ENCODE measurements at regions of chr19 and their contacts with region 1.

Region 1: GRCh38 chr19:57389730-57390598 is at the start of gene ZNF548:
- DNase-seq: peak; percentile 93 to 100 (median 98)
- ATAC-seq: peak; percentile 95
- H3K4me3 ChIP-seq: peak within 1 kb of the TSS; percentile 79 to 93
- H3K4me3 Mint-ChIP-seq: peak within 1 kb of the TSS; percentile 95
- H3K27ac ChIP-seq: peak within 1 kb of the TSS; percentile 92 to 98
- H3K27ac Mint-ChIP-seq: peak within 1 kb of the TSS; percentile 97
- H3K4me1 ChIP-seq: peaks cover 19% of the 10 kb centered on the region
- H3K4me1 Mint-ChIP-seq: peaks cover 43% of the 10 kb centered on the region
- H3K27me3 ChIP-seq: no peaks in the 10 kb centered on the region
- H3K27me3 Mint-ChIP-seq: no peaks in the 10 kb centered on the region
- CTCF ChIP-seq: no peak
- total RNA-seq, gene ZNF548: 75.4 to 79.1 TPM

Region 2: DNA sequence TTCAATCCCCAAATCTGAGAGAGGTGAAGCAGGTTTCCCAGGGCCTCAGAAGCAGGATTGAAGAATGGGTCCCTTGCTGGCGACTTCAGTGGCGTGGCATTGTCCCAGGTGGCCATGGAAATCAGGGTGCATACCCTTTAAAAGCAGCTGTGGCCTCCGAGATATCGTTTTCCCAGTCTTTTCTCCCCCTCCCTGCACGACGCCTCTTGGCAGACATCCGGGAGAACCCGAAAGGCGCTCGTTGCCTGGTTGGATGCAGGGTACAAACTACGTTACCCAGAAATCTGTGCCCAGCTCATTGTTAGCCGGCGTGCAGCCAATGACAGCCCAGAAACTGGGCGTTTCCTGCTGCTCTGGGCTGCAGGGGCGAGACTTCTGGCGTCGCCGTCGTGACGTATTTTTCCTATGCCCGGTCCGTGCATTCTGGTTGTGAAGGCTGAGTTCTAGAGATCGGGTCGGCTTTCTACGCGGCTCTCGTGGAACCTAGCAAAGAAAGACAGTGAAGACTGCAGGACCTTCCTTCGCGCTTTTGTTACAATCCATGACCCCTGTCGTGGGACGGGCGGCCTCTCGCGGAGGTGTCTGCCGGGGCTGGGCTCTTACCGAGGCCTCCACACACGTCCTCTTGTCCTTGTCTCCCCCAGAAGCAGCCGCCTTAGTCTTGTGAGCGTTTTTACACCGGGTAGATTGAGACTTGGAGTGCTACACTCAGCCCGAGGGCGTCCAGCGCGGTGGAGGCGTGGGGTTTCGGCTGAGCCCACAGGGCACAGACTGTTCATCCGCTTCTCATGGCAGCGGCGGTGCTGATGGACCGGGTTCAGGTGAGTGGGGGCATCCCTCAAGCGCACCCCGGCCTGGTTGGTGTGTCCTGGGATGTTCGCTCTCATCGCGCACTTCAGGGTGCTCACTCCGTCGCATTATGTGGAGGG is 38.8 kb before region 1 on chr19 and contains the start of gene ZNF304:
- CTCF ChIA-PET with region 1: no interaction called
- POLR2A ChIA-PET with region 1: interaction called, 3 read pairs
- intact Hi-C with region 1: loop called (anchors 1 kb)
- DNase-seq: peak; percentile 58 to 93 (median 81)
- ATAC-seq: peak; percentile 99
- H3K4me3 ChIP-seq: peak within 1 kb of the TSS; percentile 79 to 87
- H3K4me3 Mint-ChIP-seq: peak within 1 kb of the TSS; percentile 96
- H3K27ac ChIP-seq: peak within 1 kb of the TSS; percentile 68 to 73
- H3K27ac Mint-ChIP-seq: peak within 1 kb of the TSS; percentile 93
- H3K4me1 ChIP-seq: peaks cover 13% of the 10 kb centered on the region
- H3K4me1 Mint-ChIP-seq: peaks cover 32% of the 10 kb centered on the region
- H3K27me3 ChIP-seq: peaks cover 0 to 4% of the 10 kb centered on the region in 2 experiments
- H3K27me3 Mint-ChIP-seq: no peaks in the 10 kb centered on the region
- CTCF ChIP-seq: no peak
- total RNA-seq, gene ZNF304: 8.6 TPM

Region 3: DNA sequence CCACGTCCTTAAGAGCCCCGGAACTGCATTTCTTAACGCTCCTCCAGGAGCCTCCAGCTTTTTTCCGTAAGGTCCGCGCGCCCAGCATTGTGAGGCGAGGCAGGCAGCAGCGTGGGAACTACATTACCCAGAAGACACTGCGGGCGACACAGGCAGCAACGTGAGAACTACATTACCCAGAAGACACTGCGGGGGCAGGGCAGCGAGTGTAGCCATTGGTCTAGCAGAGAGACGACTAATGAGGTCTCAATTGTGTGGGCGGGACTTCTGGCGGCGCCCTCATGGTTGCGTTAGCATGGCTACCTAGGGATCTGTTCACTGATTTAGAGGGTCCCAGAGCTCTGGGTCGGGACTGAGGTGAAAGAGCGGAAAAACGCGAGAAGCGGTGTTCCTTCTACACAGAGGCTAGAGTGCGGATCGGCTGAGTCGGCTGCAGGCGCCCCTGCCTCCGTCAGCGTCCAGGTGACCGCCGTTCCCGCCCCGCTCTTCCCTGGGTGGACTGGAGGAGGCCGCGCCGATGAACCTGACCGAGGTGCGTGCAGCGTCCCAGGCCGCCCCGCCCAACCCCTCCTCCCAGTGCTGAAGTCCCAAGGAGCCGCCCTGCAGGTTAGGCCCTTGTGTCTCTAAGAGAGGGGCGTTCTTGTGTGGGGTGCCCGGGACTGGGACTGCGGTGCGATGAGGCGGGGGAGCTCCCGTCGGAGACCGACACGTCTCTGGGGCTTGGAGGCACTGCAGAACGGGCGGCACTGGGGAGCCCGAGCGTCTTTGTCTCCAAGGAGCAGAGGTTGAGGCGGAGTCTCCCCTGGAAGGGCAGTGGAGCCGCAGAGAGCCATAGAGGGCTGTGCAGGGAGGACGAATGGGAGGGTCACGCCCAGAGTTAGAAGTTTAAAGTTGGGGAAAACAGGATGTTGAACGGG is 45.4 kb after region 1 on chr19 and contains the start of gene ZNF749:
- CTCF ChIA-PET with region 1: no interaction called
- POLR2A ChIA-PET with region 1: no interaction called
- intact Hi-C with region 1: loop called (anchors 1 kb)
- DNase-seq: peak; percentile 93 to 100 (median 96)
- ATAC-seq: peak; percentile 99
- H3K4me3 ChIP-seq: peak within 1 kb of the TSS; percentile 57 to 86
- H3K4me3 Mint-ChIP-seq: peak within 1 kb of the TSS; percentile 99
- H3K27ac ChIP-seq: peak within 1 kb of the TSS; percentile 52 to 80
- H3K27ac Mint-ChIP-seq: peak within 1 kb of the TSS; percentile 97
- H3K4me1 ChIP-seq: peaks cover 11% of the 10 kb centered on the region
- H3K4me1 Mint-ChIP-seq: peaks cover 34% of the 10 kb centered on the region
- H3K27me3 ChIP-seq: no peaks in the 10 kb centered on the region
- H3K27me3 Mint-ChIP-seq: no peaks in the 10 kb centered on the region
- CTCF ChIP-seq: no peak
- total RNA-seq, gene ZNF749: 5.6 to 9.1 TPM

Region 4: DNA sequence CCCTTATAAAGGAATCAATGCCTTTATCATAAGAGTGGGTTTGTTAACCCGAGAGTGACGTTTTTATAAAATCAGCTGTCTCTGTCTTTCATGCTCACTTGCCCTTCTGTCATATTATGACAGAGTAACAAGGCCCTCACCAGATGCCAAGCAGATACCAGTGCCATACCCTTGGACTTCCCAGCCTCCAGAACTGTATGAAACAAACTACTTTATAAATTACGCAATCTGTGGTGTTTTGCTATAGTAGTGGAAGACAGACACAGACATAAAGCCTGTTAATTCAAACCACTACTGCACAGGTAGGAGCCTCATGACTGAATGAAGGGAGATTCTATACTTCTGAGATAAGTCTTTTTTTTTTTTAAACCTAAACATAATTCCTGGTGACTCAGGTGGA is 62.3 kb after region 1 on chr19:
- CTCF ChIA-PET with region 1: no interaction called
- POLR2A ChIA-PET with region 1: no interaction called
- intact Hi-C with region 1: no loop called
- DNase-seq: no peak
- ATAC-seq: no peak
- H3K4me3 ChIP-seq: no peak overlapping the region
- H3K4me3 Mint-ChIP-seq: no peak overlapping the region
- H3K27ac ChIP-seq: no peak overlapping the region
- H3K27ac Mint-ChIP-seq: no peak overlapping the region
- H3K4me1 ChIP-seq: no peaks in the 10 kb centered on the region
- H3K4me1 Mint-ChIP-seq: no peaks in the 10 kb centered on the region
- H3K27me3 ChIP-seq: no peaks in the 10 kb centered on the region
- H3K27me3 Mint-ChIP-seq: no peaks in the 10 kb centered on the region
- CTCF ChIP-seq: no peak

Region 5: DNA sequence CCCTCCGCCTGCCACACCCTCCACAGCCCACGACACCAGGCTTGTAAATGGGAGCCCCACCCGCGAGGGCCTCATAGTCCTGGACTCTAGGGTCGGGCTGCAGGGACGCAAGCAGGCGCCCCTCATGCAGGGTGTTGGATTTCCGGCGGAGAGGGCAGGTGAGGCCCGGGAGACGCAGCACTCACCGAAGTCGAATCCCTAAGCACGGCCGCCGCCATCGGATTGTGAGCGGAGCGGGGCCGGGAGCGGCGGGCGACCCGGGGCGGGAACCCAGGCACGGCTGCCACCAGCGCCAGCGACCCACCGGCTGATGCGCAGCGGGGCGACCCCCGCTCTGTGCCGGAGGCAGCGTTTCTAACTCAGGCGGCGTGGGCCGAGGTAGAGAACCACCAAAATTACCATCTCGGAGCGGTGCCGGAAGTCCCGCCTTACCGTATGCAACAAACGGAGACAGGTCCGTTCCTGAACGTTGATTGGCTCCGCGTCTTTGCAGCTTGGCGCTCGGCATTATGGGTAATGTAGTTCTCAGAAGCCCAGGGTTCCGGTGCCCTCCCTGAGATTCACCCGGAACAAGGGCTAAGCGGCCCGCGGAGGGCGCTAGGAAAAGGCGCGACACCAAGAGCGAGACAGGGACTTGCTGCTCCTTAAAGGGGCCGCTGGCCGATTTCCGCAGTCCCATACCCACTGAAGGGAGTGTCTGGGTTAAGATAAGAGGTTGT is 188.7 kb after region 1 on chr19 and contains the start of gene ZNF416:
- CTCF ChIA-PET with region 1: no interaction called
- POLR2A ChIA-PET with region 1: no interaction called
- intact Hi-C with region 1: loop called (anchors 1 kb)
- DNase-seq: peak; percentile 91 to 99 (median 94)
- ATAC-seq: peak; percentile 95
- H3K4me3 ChIP-seq: peak within 1 kb of the TSS; percentile 74 to 84
- H3K4me3 Mint-ChIP-seq: peak within 1 kb of the TSS; percentile 85
- H3K27ac ChIP-seq: peak within 1 kb of the TSS; percentile 55 to 65
- H3K27ac Mint-ChIP-seq: peak within 1 kb of the TSS; percentile 81
- H3K4me1 ChIP-seq: peaks cover 25% of the 10 kb centered on the region
- H3K4me1 Mint-ChIP-seq: peaks cover 25% of the 10 kb centered on the region
- H3K27me3 ChIP-seq: no peaks in the 10 kb centered on the region
- H3K27me3 Mint-ChIP-seq: no peaks in the 10 kb centered on the region
- CTCF ChIP-seq: no peak
- total RNA-seq, gene ZNF416: 7.7 to 8.2 TPM

Region 6: GRCh38 chr19:57819475-57820148 is 429.6 kb after region 1 on chr19:
- CTCF ChIA-PET with region 1: no interaction called
- POLR2A ChIA-PET with region 1: no interaction called
- intact Hi-C with region 1: loop called in 1 of 2 experiments (anchors 1 kb)
- DNase-seq: peak; percentile 60 to 95 (median 81)
- ATAC-seq: peak; percentile 83
- H3K4me3 ChIP-seq: peak overlapping the region; percentile 57 to 85
- H3K4me3 Mint-ChIP-seq: peak overlapping the region; percentile 96
- H3K27ac ChIP-seq: peak overlapping the region; percentile 81 to 89
- H3K27ac Mint-ChIP-seq: peak overlapping the region; percentile 97
- H3K4me1 ChIP-seq: peaks cover 15% of the 10 kb centered on the region
- H3K4me1 Mint-ChIP-seq: peaks cover 63% of the 10 kb centered on the region
- H3K27me3 ChIP-seq: no peaks in the 10 kb centered on the region
- H3K27me3 Mint-ChIP-seq: no peaks in the 10 kb centered on the region
- CTCF ChIP-seq: no peak

Region 7: GRCh38 chr19:57850553-57851017 is 460.6 kb after region 1 on chr19:
- CTCF ChIA-PET with region 1: no interaction called
- POLR2A ChIA-PET with region 1: no interaction called
- intact Hi-C with region 1: no loop called
- DNase-seq: peak in 2 of 9 experiments; percentile 8 to 12
- ATAC-seq: no peak
- H3K4me3 ChIP-seq: peak overlapping the region; percentile 68 to 85
- H3K4me3 Mint-ChIP-seq: peak overlapping the region; percentile 93
- H3K27ac ChIP-seq: peak overlapping the region; percentile 78 to 82
- H3K27ac Mint-ChIP-seq: peak overlapping the region; percentile 96
- H3K4me1 ChIP-seq: peaks cover 16% of the 10 kb centered on the region
- H3K4me1 Mint-ChIP-seq: peaks cover 33% of the 10 kb centered on the region
- H3K27me3 ChIP-seq: no peaks in the 10 kb centered on the region
- H3K27me3 Mint-ChIP-seq: no peaks in the 10 kb centered on the region
- CTCF ChIP-seq: no peak

Region 8: DNA sequence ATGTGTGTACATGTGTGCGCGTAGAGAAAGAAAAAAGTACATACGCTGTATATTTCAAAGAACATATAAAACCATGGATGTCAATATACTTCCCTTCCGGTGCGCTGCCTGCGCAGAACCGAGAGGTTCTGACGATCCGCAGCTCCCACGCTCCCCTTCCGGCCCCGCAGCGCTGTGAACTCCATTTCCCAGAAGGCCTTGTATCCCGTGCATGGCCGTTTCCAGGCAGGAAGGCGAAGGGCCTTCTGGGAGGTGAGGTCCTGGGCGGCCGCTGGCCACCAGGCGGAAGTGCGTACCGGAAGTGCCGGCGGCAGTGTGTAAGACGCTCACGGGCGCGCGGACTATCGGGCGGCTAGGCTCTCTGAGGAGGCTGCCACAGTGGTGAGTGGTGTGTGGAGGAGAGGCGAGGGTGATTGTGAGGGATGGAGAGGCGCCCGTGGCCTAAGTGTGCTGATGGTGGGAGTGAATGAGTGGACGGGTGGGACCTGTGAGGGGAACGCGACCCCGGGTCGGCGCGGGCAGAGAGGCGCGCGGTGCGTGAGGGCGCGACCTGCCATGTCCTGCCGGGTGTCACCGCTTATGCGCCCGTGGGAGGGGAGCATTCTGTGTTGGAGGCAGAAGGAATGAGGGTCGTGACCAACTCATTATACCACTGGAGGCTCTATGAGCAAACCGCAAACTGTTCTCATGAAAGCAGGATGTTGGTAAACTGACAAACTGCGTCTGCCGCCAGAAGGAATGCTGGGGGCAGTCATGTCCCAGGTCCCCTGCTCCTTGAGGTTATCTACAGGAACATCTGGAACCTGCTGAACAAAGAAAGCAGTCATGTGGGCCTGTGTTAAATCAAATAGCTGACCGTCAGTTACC is 915.3 kb after region 1 on chr19 and contains the start of gene ERVK3-1:
- CTCF ChIA-PET with region 1: no interaction called
- POLR2A ChIA-PET with region 1: no interaction called
- intact Hi-C with region 1: loop called in 1 of 2 experiments (anchors 1 kb)
- DNase-seq: peak; percentile 89 to 99 (median 93)
- ATAC-seq: peak; percentile 96
- H3K4me3 ChIP-seq: peak within 1 kb of the TSS; percentile 82 to 89
- H3K4me3 Mint-ChIP-seq: peak within 1 kb of the TSS; percentile 98
- H3K27ac ChIP-seq: peak within 1 kb of the TSS; percentile 93 to 95
- H3K27ac Mint-ChIP-seq: peak within 1 kb of the TSS; percentile 99
- H3K4me1 ChIP-seq: peaks cover 27% of the 10 kb centered on the region
- H3K4me1 Mint-ChIP-seq: peaks cover 53% of the 10 kb centered on the region
- H3K27me3 ChIP-seq: no peaks in the 10 kb centered on the region
- H3K27me3 Mint-ChIP-seq: no peaks in the 10 kb centered on the region
- CTCF ChIP-seq: no peak
- total RNA-seq, gene ERVK3-1: 174 to 182 TPM

Measured in CD8-positive, alpha-beta T cell (primary cell).